Esophagus muscularis mucosa (tissue), 4 donors: ENCODE measurements at regions of chr17 and their contacts with region 1.

Region 1: GRCh38 chr17:57995076-57995956 is 7.3 kb upstream of the VEZF1 start:
- DNase-seq: peak; percentile 92
- H3K4me3 ChIP-seq: no peak overlapping the region
- H3K27ac ChIP-seq: peak overlapping the region; percentile 71 to 97 (median 76)
- H3K4me1 ChIP-seq: peaks cover 24 to 44% (median 41%) of the 10 kb centered on the region in 4 donors
- H3K27me3 ChIP-seq: no peaks in the 10 kb centered on the region
- CTCF ChIP-seq: peak; percentile 68 to 82 (median 72)
- EP300 ChIP-seq: no peak
- POLR2A ChIP-seq: no peak

Region 2: GRCh38 chr17:57859601-57860396 is 135.5 kb before region 1 on chr17:
- intact Hi-C with region 1: loop called (anchors 2 kb)
- DNase-seq: no peak
- H3K4me3 ChIP-seq: no peak overlapping the region
- H3K27ac ChIP-seq: peak overlapping the region; percentile 88 to 96 (median 94)
- H3K4me1 ChIP-seq: peaks cover 47 to 91% (median 82%) of the 10 kb centered on the region in 4 donors
- H3K27me3 ChIP-seq: no peaks in the 10 kb centered on the region
- CTCF ChIP-seq: no peak
- EP300 ChIP-seq: no peak
- POLR2A ChIP-seq: no peak